Head of caudate nucleus (tissue), 42 donors: ENCODE measurements at regions of chr16 and their contacts with region 1.

Region 1: GRCh38 chr16:56311208-56312027 is 113.9 kb downstream of the AMFR start:
- DNase-seq: peak in 3 of 42 donors; percentile 60 to 74 (median 62)

Region 2: DNA sequence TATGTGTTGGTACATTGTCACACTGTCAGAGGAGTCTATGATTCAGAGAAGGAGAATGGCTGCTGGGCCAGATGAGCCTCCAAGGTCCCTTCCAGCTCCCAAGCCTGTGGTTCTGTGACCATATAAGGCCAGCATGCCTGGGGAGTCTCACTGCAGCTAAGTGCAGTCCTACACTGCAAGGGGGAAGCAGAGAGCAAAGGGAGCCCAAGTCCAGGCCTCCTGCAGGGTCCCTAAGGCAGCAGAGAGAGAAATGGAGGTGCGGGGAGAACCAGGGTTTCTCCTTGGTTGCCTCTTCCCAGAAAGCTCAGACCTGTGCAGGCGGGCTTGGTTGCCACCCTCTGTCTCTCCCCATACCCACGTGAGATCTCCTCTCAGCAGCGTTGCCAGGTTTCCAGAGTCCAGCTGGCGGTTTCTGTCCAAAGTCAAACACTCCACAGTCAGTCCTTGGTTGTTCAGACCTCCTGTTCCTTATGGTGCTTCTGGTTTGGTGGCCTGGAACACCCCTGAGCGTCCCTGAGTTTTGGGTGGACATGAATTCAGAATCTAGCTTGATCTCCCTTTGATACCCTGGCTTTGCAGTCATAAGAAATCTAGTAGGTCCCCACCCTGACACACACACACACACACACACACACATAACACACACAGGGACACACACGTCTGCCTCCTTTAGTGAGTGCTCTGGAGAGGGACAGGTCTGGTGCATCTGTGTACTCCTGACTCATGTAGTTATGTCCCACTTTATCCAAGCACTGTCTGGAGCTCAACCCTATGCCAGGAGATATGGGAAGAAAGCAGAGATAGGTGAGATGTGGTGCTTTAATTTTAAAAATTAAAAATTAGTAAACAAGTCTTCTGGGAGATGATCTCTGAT is 41.4 kb before region 1 on chr16:
- intact Hi-C with region 1: loop called (anchors 5 kb)
- DNase-seq: peak in 32 of 42 donors; percentile 37 to 87 (median 69)

Region 3: DNA sequence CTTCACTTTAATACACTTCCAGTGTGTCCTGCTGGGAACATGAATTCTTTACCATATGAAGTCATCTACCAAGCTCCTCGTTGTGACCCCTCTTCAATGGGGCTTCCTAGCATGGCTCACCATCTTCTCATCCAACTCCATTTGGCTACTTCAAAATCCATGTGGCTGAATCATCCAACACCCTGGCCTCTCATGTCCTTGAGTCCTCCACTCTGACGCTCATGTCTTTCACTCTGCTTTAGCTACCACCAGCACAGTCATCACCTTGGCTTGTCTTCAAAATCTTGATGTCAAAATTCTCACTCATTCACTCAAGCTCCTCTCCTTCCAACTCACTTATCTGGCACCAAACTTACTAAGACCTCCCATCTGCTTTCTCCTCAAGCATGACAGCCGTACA is 78.1 kb after region 1 on chr16:
- intact Hi-C with region 1: no loop called
- DNase-seq: no peak